ENCODE measurements at regions of chr10 and their contacts with region 1.

Region 1: GRCh38 chr10:74589226-74589673 is 237.2 kb upstream of the KAT6B start:
- DNase-seq: peak; percentile 95
- H3K4me3 Mint-ChIP-seq: peak overlapping the region; percentile 27
- H3K27ac Mint-ChIP-seq: peak overlapping the region; percentile 68
- H3K4me1 Mint-ChIP-seq: peaks cover 47% of the 10 kb centered on the region
- H3K27me3 Mint-ChIP-seq: no peaks in the 10 kb centered on the region

Region 2: DNA sequence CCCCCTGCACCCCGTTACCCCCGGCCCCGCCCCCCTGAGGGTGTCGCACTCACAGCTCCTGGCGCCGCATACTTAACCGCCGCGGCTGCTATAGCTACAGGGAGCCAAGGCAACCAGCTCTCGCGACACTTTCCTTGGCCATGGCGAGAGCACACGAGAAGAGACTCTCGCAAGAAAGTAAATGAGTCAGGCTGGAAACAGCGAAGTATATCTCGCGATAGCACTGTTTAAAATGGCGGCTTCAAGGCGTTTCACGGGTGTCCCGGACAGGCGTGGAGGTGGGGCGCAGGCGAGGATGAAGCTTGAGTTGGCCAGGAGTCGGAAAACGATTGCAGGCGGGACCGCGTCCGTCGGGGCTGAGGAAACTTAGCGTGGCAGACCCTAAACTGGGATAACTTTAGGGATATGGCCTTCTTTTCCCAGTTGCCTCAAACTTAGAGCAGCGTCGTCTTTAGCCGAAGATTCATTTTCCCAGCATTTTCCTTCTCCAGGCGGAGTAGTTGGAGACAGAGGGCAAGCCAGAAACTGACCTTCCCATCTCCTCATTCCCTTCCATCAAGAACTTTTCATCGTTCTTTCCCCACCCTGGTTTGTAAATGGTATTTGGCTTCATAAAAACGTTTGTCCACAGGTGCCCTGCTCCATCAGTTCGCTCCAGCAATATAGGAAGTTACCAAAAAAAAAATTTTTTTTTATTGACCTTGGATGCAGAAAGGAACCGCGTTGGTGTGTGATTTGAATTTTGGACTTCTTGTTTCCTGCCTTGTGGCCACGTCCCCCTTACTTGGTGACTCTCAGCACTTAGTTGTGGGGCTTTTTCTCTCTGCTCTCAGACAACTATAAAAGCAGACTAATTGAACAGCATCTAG is 963.1 kb before region 1 on chr10:
- CTCF ChIA-PET with region 1: no interaction called
- intact Hi-C with region 1: loop called (anchors 10 kb)
- DNase-seq: peak; percentile 97
- H3K4me3 Mint-ChIP-seq: peak overlapping the region; percentile 99
- H3K27ac Mint-ChIP-seq: peak overlapping the region; percentile 95
- H3K4me1 Mint-ChIP-seq: peaks cover 17% of the 10 kb centered on the region
- H3K27me3 Mint-ChIP-seq: no peaks in the 10 kb centered on the region

Region 3: GRCh38 chr10:74176380-74177139 is 412.7 kb before region 1 on chr10:
- CTCF ChIA-PET with region 1: no interaction called
- intact Hi-C with region 1: loop called (anchors 5 kb)
- DNase-seq: peak; percentile 96
- H3K4me3 Mint-ChIP-seq: peak overlapping the region; percentile 90
- H3K27ac Mint-ChIP-seq: peak overlapping the region; percentile 93
- H3K4me1 Mint-ChIP-seq: peaks cover 32% of the 10 kb centered on the region
- H3K27me3 Mint-ChIP-seq: no peaks in the 10 kb centered on the region

Region 4: DNA sequence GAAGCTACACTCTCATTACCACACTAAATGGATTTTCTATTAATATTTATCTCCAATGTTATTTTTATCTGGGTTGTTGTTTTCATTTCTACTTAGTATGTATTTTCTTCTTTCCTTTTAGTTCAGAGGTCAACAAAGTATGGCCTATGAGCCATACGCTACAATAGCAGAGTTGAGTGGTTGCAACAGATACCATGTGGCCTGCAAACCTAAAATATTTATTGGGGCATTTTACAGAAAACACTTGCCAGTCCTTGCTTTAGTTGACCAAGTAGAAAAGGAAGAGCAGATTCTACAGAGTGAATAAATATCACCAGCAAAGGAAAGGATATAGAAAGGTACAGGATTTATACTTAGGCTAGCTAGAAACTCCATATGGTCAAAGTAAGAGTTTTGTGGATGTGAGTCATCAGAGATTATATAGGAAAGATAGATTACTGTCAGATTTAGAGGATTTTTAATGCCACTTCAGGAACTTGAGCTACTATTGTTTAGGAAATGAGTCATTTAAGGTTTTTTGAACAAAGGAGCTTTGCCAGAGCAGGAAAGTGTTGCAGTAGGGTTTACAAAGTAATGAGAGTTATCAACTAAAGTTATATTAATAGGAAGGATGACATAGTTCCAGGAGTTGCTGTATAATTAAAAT is 86.2 kb before region 1 on chr10:
- CTCF ChIA-PET with region 1: no interaction called
- intact Hi-C with region 1: loop called (anchors 1 kb)
- DNase-seq: no peak
- H3K4me3 Mint-ChIP-seq: no peak overlapping the region
- H3K27ac Mint-ChIP-seq: peak overlapping the region; percentile 75
- H3K4me1 Mint-ChIP-seq: peaks cover 52% of the 10 kb centered on the region
- H3K27me3 Mint-ChIP-seq: no peaks in the 10 kb centered on the region

Region 5: GRCh38 chr10:74871595-74872382 is 282.5 kb after region 1 on chr10:
- CTCF ChIA-PET with region 1: no interaction called
- intact Hi-C with region 1: loop called (anchors 2 kb)
- DNase-seq: peak; percentile 53
- H3K4me3 Mint-ChIP-seq: peak overlapping the region; percentile 62
- H3K27ac Mint-ChIP-seq: peak overlapping the region; percentile 73
- H3K4me1 Mint-ChIP-seq: peaks cover 61% of the 10 kb centered on the region
- H3K27me3 Mint-ChIP-seq: no peaks in the 10 kb centered on the region

Region 6: DNA sequence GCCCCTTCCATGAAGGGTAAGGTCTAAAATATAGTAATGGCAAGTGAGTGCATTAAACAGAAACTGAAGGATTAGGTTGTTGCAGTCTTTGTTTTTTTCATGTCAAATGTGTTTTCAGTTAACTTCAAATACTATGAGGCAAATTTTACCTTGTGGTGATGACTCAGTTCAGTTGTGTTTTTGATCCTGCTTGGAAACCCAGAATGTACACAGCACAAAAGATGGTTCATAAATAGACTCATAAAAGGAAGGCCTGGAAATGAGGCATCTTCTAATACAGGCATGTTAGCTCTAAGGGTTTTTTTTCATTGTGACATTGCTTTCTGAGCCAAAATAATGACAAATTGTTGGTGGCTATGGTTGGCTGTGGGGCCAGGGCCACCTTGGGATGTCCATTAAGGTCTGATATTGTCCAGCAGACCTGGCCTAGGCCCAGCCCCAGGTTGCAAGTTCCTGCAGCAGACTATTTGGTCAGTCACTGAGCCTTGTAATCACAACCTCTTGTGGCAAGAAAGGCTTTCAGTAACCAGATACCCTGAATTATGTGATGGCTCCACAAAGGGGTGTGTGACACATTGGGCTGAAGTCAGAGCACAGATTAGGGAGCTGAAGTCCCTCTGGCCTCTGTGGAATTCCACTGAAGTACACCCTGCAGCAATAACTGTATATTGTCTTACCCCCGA is 453.2 kb after region 1 on chr10:
- CTCF ChIA-PET with region 1: no interaction called
- intact Hi-C with region 1: loop called (anchors 1 kb)
- DNase-seq: peak; percentile 30
- H3K4me3 Mint-ChIP-seq: peak overlapping the region; percentile 20
- H3K27ac Mint-ChIP-seq: peak overlapping the region; percentile 87
- H3K4me1 Mint-ChIP-seq: peaks cover 45% of the 10 kb centered on the region
- H3K27me3 Mint-ChIP-seq: peaks cover 7% of the 10 kb centered on the region

Region 7: DNA sequence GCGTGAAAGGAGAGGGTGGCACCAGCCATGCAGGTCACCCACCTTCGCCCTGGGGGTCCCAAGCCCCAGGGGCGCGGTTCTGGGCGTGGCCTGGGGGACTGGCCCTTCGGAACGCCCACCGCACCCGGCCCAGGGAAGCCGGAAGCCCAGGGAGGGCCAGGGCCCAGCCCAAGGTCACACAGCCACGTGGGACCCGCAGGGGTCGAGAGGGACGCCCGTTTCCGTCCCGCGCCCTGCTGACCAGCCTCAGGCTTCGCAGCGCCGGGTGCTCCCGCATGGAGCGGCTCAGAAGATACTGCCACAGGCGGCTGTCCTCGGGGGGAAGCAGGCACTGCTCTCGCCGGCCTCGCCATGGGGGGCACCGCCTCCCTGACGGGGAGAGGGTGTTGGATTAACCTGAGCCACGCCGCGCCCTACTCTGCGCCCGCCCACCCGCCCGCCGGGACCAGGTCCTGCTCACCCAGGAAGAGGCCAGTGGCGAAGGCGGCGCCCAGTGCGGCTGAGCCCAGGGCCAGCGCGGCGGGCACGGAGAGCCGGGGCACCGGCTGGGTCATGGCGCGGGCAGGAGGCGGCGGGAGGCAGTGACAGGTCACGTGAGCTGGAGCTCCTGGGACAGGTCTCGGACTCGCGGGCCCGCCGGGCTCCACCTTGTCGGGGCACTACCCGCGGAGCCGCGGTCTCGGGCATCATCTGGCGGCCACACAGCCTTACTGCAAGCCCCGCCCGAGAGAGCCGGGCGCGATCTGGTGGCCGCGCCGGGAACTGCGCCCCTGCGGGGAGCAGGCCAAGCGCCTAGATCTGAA is 646.3 kb after region 1 on chr10 and contains the start of gene COMTD1:
- CTCF ChIA-PET with region 1: no interaction called
- intact Hi-C with region 1: loop called (anchors 1 kb)
- DNase-seq: peak; percentile 96
- H3K4me3 Mint-ChIP-seq: peak within 1 kb of the TSS; percentile 80
- H3K27ac Mint-ChIP-seq: peak within 1 kb of the TSS; percentile 84
- H3K4me1 Mint-ChIP-seq: peaks cover 18% of the 10 kb centered on the region
- H3K27me3 Mint-ChIP-seq: no peaks in the 10 kb centered on the region
- total RNA-seq, gene COMTD1: 33.2 to 34.8 TPM